AG04450 (cell line): ENCODE measurements at regions of chr1 and their contacts with region 1.

Region 1: DNA sequence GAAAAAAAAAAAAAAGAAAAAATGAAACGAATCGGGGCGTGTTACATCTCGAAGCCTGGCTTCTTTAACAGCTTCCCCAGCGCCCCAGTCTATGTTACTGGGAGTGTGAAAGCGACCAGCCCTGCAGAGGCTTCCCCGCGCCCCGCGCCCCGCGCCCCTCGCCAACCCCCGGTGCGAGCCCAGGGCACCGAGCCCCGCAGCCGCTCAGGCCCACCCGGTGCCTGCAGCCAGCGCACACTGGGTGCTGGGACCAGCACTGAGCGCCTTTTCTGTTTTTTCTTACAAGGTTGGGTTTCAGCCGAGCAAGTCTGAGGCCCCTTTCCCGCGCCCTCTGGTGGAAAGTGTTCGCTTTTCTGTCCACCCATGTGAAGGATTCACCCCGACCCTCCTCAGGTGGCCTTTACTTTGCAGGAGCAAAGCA is 42.1 kb upstream of the ZNF496 start:
- DNase-seq: no peak
- H3K4me3 ChIP-seq: peak overlapping the region; percentile 29; the same call in 1 of the 2 replicates
- H3K27ac ChIP-seq: no peak overlapping the region
- H3K27me3 ChIP-seq: no peaks in the 10 kb centered on the region
- CTCF ChIP-seq: peak; percentile 60

Region 2: GRCh38 chr1:247121382-247121781 is 252.3 kb before region 1 on chr1:
- CTCF ChIA-PET with region 1: no interaction called
- POLR2A ChIA-PET with region 1: no interaction called
- DNase-seq: no peak
- H3K4me3 ChIP-seq: no peak overlapping the region
- H3K27ac ChIP-seq: no peak overlapping the region
- H3K27me3 ChIP-seq: no peaks in the 10 kb centered on the region
- CTCF ChIP-seq: no peak

Region 3: GRCh38 chr1:247357781-247358211 is 15.9 kb before region 1 on chr1:
- CTCF ChIA-PET with region 1: interaction called, 16 read pairs
- POLR2A ChIA-PET with region 1: interaction called, 3 read pairs
- DNase-seq: peak; percentile 37
- H3K4me3 ChIP-seq: no peak overlapping the region
- H3K27ac ChIP-seq: peak overlapping the region; percentile 69
- H3K27me3 ChIP-seq: no peaks in the 10 kb centered on the region
- CTCF ChIP-seq: no peak

Region 4: GRCh38 chr1:247487057-247487456 is 113.3 kb after region 1 on chr1:
- CTCF ChIA-PET with region 1: interaction called, 13 read pairs
- POLR2A ChIA-PET with region 1: no interaction called
- DNase-seq: peak; percentile 1
- H3K4me3 ChIP-seq: no peak overlapping the region
- H3K27ac ChIP-seq: no peak overlapping the region
- H3K27me3 ChIP-seq: no peaks in the 10 kb centered on the region
- CTCF ChIP-seq: peak; percentile 42